B cell (primary cell): ENCODE measurements at regions of chr1 and their contacts with region 1.

Region 1: GRCh38 chr1:156054500-156055280 is at the start of gene LAMTOR2:
- DNase-seq: peak; percentile 94
- ATAC-seq: peak; percentile 73
- H3K4me3 ChIP-seq: peak within 1 kb of the TSS; percentile 78 to 99 (median 96)
- H3K4me3 Mint-ChIP-seq: peak within 1 kb of the TSS; percentile 92
- H3K27ac ChIP-seq: peak within 1 kb of the TSS; percentile 77 to 85
- H3K27ac Mint-ChIP-seq: peak within 1 kb of the TSS; percentile 92
- H3K4me1 ChIP-seq: peaks cover 8 to 24% of the 10 kb centered on the region in 2 donors
- H3K4me1 Mint-ChIP-seq: peaks cover 32% of the 10 kb centered on the region
- H3K27me3 ChIP-seq: no peaks in the 10 kb centered on the region
- H3K27me3 Mint-ChIP-seq: no peaks in the 10 kb centered on the region
- CTCF ChIP-seq: no peak
- total RNA-seq, gene LAMTOR2: 31.5 and 37.8 TPM in 2 replicates

Region 2: DNA sequence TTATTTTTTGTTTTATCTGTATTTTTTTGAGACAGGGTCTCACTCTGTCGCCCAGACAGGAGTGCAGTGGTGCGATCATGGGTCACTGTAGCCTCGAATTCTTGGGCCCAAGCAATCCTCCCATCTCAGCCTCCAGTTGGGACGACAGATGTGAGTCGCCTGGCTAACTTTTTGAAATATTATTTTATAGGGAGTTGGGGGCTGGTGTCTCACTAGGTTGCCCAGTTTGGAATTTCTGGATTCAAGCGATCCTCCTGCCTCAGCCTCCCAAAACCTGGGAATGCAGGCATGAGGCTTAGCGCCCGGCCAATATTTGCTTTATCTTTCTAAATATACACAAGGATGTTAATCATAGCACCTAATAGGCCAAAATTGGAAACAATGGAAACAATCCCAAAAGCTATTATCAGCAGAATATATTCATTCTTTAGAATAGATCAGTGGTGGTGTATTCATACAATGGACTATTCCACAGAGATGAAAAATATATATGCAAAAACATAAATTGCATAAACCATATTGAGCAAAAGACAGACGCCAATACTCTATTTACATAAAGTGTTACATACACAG is 309.9 kb before region 1 on chr1:
- CTCF ChIA-PET with region 1: no interaction called
- POLR2A ChIA-PET with region 1: no interaction called
- intact Hi-C with region 1: loop called (anchors 2 kb)
- DNase-seq: no peak
- ATAC-seq: no peak
- H3K4me3 ChIP-seq: peak overlapping the region; percentile 64 to 91 (median 80)
- H3K4me3 Mint-ChIP-seq: peak overlapping the region; percentile 98
- H3K27ac ChIP-seq: peak overlapping the region; percentile 69 to 76
- H3K27ac Mint-ChIP-seq: peak overlapping the region; percentile 97
- H3K4me1 ChIP-seq: peaks cover 5 to 6% of the 10 kb centered on the region in 2 donors
- H3K4me1 Mint-ChIP-seq: peaks cover 5% of the 10 kb centered on the region
- H3K27me3 ChIP-seq: no peaks in the 10 kb centered on the region
- H3K27me3 Mint-ChIP-seq: no peaks in the 10 kb centered on the region
- CTCF ChIP-seq: no peak

Region 3: GRCh38 chr1:155934097-155934935 is 120.4 kb before region 1 on chr1 and contains the start of gene KHDC4:
- CTCF ChIA-PET with region 1: interaction called, 3 read pairs
- POLR2A ChIA-PET with region 1: interaction called, 3 read pairs
- intact Hi-C with region 1: loop called (anchors 1 kb)
- DNase-seq: peak; percentile 98
- ATAC-seq: peak; percentile 93
- H3K4me3 ChIP-seq: peak within 1 kb of the TSS; percentile 79 to 97 (median 84)
- H3K4me3 Mint-ChIP-seq: no peak within 1 kb of the TSS
- H3K27ac ChIP-seq: peak within 1 kb of the TSS; percentile 86 to 89
- H3K27ac Mint-ChIP-seq: peak within 1 kb of the TSS; percentile 54
- H3K4me1 ChIP-seq: peaks cover 43 to 55% of the 10 kb centered on the region in 2 donors
- H3K4me1 Mint-ChIP-seq: peaks cover 37% of the 10 kb centered on the region
- H3K27me3 ChIP-seq: no peaks in the 10 kb centered on the region
- H3K27me3 Mint-ChIP-seq: no peaks in the 10 kb centered on the region
- CTCF ChIP-seq: peak; percentile 57
- total RNA-seq, gene KHDC4: 122 TPM in 2 replicates

Region 4: DNA sequence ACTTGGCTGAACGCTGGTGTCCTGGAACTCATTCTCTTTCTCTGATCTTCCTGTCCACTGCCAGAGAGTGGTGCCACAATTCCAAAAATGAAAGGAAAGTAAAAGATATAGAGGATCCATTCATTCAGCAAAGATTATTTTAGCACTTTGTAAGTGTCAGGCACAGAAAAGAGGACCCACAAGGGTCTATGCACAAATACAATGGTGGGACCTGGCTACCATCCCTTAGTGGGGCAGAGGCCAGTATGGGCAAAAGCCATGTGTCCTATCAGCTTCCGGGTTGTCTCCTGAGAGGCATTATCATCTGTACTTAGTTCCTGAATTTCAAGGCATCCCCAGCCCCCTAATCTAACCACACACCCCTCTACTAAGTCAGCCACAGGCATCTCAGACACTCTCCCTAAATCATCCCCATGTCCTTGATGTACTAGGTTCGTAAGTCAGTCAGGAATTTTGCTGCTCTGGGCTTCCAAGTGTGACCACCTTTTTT is 53.0 kb before region 1 on chr1:
- CTCF ChIA-PET with region 1: no interaction called
- POLR2A ChIA-PET with region 1: no interaction called
- intact Hi-C with region 1: no loop called
- DNase-seq: no peak
- ATAC-seq: no peak
- H3K4me3 ChIP-seq: no peak overlapping the region
- H3K4me3 Mint-ChIP-seq: no peak overlapping the region
- H3K27ac ChIP-seq: no peak overlapping the region
- H3K27ac Mint-ChIP-seq: no peak overlapping the region
- H3K4me1 ChIP-seq: no peaks in the 10 kb centered on the region
- H3K4me1 Mint-ChIP-seq: no peaks in the 10 kb centered on the region
- H3K27me3 ChIP-seq: no peaks in the 10 kb centered on the region
- H3K27me3 Mint-ChIP-seq: no peaks in the 10 kb centered on the region
- CTCF ChIP-seq: no peak

Region 5: GRCh38 chr1:156020292-156021089 is 34.2 kb before region 1 on chr1 and contains the start of gene SSR2:
- CTCF ChIA-PET with region 1: interaction called, 3 read pairs
- POLR2A ChIA-PET with region 1: interaction called, 4 read pairs
- intact Hi-C with region 1: loop called (anchors 1 kb)
- DNase-seq: peak; percentile 89
- ATAC-seq: peak; percentile 99
- H3K4me3 ChIP-seq: peak within 1 kb of the TSS; percentile 71 to 87 (median 81)
- H3K4me3 Mint-ChIP-seq: peak within 1 kb of the TSS; percentile 99
- H3K27ac ChIP-seq: peak within 1 kb of the TSS; percentile 59 to 68
- H3K27ac Mint-ChIP-seq: peak within 1 kb of the TSS; percentile 90
- H3K4me1 ChIP-seq: peaks cover 9 to 17% of the 10 kb centered on the region in 2 donors
- H3K4me1 Mint-ChIP-seq: peaks cover 22% of the 10 kb centered on the region
- H3K27me3 ChIP-seq: peaks cover 0 to 6% (median 0%) of the 10 kb centered on the region in 4 experiments
- H3K27me3 Mint-ChIP-seq: peaks cover 6% of the 10 kb centered on the region
- CTCF ChIP-seq: no peak
- total RNA-seq, gene SSR2: 160 and 161 TPM in 2 replicates

Region 6: GRCh38 chr1:156076501-156077429 is 22.1 kb after region 1 on chr1:
- CTCF ChIA-PET with region 1: no interaction called
- POLR2A ChIA-PET with region 1: no interaction called
- intact Hi-C with region 1: no loop called
- DNase-seq: peak; percentile 66
- ATAC-seq: peak; percentile 91
- H3K4me3 ChIP-seq: peak overlapping the region in 4 of 5 experiments; percentile 33 to 57 (median 54)
- H3K4me3 Mint-ChIP-seq: peak overlapping the region; percentile 89
- H3K27ac ChIP-seq: peak overlapping the region in 1 of 2 donors; percentile 39
- H3K27ac Mint-ChIP-seq: peak overlapping the region; percentile 73
- H3K4me1 ChIP-seq: peaks cover 12 to 28% of the 10 kb centered on the region in 2 donors
- H3K4me1 Mint-ChIP-seq: peaks cover 30% of the 10 kb centered on the region
- H3K27me3 ChIP-seq: peaks cover 0 to 8% (median 3%) of the 10 kb centered on the region in 4 experiments
- H3K27me3 Mint-ChIP-seq: no peaks in the 10 kb centered on the region
- CTCF ChIP-seq: no peak

Region 7: DNA sequence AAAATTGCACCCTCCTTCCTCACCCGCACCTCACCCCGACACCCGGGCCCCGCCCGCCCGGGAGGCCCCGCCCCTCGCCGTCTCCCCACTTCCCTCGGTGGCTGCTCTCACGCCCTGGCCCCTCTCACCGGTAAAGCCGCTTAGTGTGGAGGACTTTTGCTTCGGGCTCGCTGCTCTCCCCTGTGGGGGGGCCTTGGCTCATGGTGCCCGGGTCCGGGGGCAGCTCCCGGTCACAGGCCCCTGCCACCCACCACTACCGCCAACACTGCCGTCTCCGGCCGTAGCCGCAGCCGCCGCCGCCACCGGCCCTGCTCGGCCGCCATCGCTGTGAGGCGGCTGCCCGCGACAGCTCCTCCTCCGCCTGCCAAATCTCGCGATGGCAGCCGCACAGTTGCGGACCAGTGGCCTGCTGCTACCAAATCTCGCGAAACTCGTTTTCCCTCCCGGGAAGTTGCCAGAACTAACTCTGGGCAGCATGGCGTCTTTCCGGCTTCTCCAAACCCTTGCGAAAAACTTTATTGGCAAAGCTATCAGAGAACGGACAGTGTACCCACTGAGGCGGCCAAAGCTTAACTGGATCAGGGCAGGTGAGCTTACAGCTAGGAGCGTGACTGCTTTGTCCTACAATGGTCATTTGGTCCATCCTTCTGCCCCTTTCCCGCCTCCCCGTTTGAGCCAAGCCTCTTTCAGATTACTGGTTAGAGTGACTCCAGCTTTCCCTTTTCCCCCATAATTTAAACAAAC is 228.0 kb after region 1 on chr1 and contains the start of gene SMG5:
- CTCF ChIA-PET with region 1: interaction called, 4 read pairs
- POLR2A ChIA-PET with region 1: no interaction called
- intact Hi-C with region 1: loop called (anchors 1 kb)
- DNase-seq: peak; percentile 98
- ATAC-seq: peak; percentile 93
- H3K4me3 ChIP-seq: peak within 1 kb of the TSS; percentile 74 to 99 (median 86)
- H3K4me3 Mint-ChIP-seq: peak within 1 kb of the TSS; percentile 98
- H3K27ac ChIP-seq: peak within 1 kb of the TSS; percentile 79 to 89
- H3K27ac Mint-ChIP-seq: peak within 1 kb of the TSS; percentile 98
- H3K4me1 ChIP-seq: peaks cover 20 to 28% of the 10 kb centered on the region in 2 donors
- H3K4me1 Mint-ChIP-seq: peaks cover 39% of the 10 kb centered on the region
- H3K27me3 ChIP-seq: no peaks in the 10 kb centered on the region
- H3K27me3 Mint-ChIP-seq: no peaks in the 10 kb centered on the region
- CTCF ChIP-seq: no peak
- total RNA-seq, gene SMG5: 74.0 and 77.0 TPM in 2 replicates